GM13977 (cell line): ENCODE measurements at regions of chr4 and their contacts with region 1.

Region 1: GRCh38 chr4:153344131-153345010 is at the start of gene MND1:
- DNase-seq: peak; percentile 93
- CTCF ChIP-seq: peak; percentile 84

Region 2: DNA sequence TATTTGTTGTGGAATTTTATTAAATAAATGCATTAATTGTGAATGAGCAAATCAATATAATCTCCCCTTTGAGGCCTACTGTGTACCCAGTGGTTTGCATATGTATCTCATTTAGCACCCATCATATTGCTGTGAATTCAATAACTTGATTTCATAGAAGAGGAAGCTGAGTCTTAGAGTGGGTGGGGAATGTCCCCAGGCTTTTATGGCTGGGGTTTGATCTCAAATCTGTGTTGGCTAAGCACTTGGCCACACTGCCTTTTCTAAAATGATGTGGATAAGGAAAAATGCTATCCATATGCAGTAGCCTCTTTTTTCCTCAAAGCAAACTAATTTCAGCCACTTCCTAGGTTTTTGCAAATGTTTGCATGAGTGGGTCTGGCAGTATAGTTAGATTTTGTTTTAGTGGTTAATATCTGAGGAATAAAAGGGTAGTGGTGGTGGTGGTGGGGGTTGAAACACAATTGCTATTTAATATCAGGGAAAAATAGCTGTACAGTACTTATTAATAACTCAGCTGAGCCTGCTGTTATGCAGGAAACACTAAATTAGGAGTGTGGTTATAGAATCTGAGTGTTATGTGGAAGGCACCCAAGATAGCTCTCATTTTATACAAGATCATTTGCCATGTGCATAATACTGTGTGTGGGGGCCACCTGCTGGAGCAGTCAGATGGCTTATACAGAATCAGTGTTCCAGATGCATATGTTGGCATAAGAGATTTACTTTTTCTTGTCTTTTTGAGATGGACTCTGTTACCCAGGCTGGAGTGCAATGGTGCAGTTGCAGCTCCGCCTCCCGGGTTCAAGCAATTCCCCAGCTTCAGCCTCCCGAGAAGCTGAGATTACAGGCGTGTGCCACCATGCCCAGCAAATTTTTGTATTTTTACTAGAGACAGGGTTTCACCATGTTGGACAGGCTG is 229.8 kb after region 1 on chr4:
- in situ Hi-C with region 1: loop called (anchors 10 kb)
- DNase-seq: peak; percentile 27
- CTCF ChIP-seq: peak; percentile 55

Region 3: DNA sequence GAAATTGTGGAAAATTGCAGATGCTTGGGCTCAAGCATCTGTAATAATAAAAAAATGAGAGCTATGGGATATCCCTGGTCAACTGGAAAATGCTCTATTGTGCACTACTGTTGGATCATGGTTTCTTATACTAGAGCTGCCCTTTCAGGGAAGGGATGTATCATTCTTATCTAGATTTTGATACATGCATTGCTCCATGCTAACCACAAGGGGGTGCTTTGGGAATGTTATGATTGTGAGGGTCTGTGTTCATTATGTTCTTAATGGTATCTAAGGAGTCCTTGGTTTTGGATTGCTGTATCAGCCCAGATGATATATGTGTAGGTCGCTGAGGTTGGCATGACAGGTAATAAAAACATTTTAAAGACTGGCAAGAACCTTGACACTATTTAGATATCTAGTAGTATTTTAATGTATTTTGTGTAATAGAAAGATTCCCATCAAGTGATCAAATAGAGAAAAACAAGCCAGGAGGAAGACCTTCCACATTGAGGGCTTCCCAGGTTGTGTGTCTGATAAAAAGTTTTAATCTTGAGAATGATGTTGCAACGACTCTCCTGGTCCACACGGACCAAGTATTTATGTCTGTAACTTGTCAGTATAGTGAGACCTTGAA is 290.5 kb after region 1 on chr4:
- in situ Hi-C with region 1: loop called (anchors 10 kb)
- DNase-seq: no peak
- CTCF ChIP-seq: peak; percentile 42

Region 4: GRCh38 chr4:153750197-153750817 is 405.9 kb after region 1 on chr4:
- in situ Hi-C with region 1: loop called (anchors 25 kb)
- DNase-seq: peak; percentile 69
- CTCF ChIP-seq: peak; percentile 75